ENCODE measurements at regions of chr3 and their contacts with region 1.

Region 1: DNA sequence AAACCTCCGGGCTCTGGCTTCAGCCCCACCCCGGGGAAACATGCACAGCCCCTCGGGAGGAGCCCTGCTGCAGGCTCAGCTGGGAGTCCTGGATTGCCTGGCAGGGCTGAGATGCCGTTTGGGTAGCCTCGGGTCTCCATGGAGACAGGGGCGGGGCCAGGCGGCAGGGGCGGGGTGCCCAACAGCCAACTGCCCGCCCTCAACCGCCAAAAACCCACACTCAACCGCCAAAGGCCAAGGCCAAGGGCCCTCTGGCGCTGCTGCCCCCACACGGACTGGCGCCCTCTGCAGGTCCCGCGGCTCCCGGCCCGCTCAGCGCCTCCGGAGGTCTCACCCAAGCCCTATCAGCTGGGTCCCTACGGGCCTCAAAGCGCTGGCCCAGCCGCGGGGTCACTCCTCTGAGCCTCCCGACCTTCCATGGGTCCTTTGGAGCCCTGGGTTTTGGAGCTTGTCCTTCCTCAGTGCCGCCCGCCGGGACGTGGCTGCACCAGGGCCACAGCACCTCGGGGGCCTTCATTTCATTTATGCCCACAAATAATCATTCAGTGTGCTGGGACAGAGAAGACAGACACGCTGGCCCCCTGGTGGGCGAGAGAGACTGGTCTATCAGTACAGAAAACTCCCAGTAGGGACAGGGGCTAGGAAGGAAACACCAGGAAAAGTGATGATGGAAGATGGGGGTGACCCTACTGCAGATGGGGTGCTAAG is 33.5 kb upstream of the ACAD9 start:
- DNase-seq: peak; percentile 92
- CTCF ChIP-seq: peak; percentile 64

Region 2: GRCh38 chr3:128617557-128618397 is 228.2 kb before region 1 on chr3:
- CTCF ChIA-PET with region 1: interaction called, 18 read pairs
- POLR2A ChIA-PET with region 1: no interaction called
- DNase-seq: peak; percentile 100
- CTCF ChIP-seq: peak; percentile 94

Region 3: GRCh38 chr3:128824132-128824850 is 21.6 kb before region 1 on chr3:
- CTCF ChIA-PET with region 1: interaction called, 14 read pairs
- POLR2A ChIA-PET with region 1: no interaction called
- DNase-seq: no peak
- CTCF ChIP-seq: no peak

Region 4: GRCh38 chr3:128864351-128864811 is 18.4 kb after region 1 on chr3:
- CTCF ChIA-PET with region 1: interaction called, 22 read pairs
- POLR2A ChIA-PET with region 1: no interaction called
- DNase-seq: peak; percentile 5
- CTCF ChIP-seq: no peak

Region 5: GRCh38 chr3:128879125-128879969 is 33.4 kb after region 1 on chr3 and contains the start of gene ACAD9:
- CTCF ChIA-PET with region 1: interaction called, 19 read pairs
- POLR2A ChIA-PET with region 1: no interaction called
- DNase-seq: peak; percentile 100
- CTCF ChIP-seq: no peak

Region 6: DNA sequence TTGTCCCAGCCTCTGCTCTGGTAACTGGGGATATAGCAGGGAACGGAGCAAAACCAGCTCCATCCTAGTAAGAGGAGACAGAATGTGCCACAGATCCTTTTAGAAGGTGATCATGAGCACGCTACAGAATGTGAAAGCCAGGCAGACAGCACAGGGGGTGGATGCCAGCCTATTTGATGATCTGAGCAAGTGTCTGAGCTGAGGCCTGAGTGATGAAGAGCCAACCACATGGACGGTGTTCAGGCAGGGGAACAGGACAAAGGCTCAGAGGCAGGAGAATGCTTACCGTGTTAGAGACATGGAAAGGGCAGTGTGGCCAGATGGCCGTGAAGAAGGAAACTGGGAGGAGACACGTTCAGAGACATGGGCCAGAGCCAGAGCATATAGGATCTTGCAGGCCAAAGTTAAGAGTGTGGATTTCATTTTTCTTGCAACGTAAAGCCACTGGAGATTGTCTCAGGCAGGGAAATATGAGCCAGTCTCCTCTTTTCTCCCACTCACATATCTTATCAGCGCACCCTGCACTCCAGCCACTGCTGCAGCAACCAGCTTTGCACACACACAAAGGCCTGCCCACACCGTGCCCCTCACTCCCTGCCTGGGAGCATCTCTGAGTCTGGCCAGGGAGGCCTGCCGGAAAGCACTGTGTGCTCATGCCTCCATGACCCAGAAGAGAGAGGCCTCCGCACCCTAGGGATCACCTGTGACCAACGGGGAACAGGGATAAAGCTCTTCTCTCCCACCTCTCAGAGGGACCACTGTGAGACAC is 255.6 kb after region 1 on chr3:
- CTCF ChIA-PET with region 1: no interaction called
- POLR2A ChIA-PET with region 1: no interaction called
- DNase-seq: no peak
- CTCF ChIP-seq: no peak

Measured in GM10248 (cell line).